Testis (tissue), 5 donors: ENCODE measurements at regions of chr2 and their contacts with region 1.

Region 1: DNA sequence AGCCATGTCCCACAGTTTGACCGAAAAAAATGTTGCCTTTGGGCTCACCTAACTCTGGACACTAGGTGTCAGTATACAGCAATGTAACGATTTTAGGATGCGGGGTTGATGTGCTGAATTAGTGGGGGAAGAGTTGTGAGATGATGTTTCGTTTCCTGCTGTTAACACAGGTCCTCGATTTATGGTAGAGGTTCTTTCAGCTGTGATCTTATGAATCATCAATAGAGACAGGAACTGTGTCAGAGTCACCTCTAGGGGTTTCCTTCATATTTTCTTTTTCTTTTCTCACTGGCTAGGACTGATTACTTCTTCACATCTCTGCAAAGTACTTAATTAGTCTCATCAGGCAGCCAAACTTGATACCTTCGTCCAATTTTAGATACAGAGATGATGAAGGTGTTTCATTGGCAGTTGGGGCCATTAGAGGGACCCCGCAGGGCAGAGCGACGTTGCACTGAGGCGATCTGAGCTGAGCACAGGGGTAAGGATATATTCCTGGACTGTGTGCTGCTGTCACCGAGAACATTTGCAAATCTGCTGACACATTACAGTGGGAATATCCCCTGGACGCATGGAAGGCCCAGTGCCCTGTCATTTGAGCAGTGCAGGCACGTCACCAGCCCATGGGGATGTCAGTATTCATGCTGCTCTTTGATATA is 10.2 kb upstream of the MMADHC start:
- DNase-seq: peak; percentile 43
- H3K4me3 ChIP-seq: no peak overlapping the region
- H3K27ac ChIP-seq: no peak overlapping the region
- H3K4me1 ChIP-seq: no peaks in the 10 kb centered on the region
- H3K27me3 ChIP-seq: no peaks in the 10 kb centered on the region
- CTCF ChIP-seq: peak; percentile 70 to 79 (median 75)
- POLR2A ChIP-seq: no peak

Region 2: DNA sequence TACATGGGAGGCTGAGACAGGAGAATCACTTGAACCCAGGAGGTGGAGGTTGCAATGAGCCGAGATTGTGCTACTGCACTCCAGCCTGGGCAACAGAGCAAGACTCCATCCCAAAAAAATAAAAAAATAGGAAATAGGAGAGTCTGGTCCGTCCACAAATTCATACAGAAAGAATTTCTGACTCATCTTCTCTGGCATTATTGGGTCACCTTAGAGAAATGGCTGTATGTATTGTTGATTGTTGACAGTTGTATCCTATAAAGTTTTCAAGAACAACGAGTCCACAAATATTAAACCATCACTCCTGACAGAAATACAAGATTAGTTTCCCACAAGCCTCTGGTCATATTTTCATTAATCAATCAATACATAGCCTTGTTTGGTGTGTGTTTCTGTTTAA is 1643.4 kb after region 1 on chr2:
- intact Hi-C with region 1: loop called (anchors 10 kb)
- DNase-seq: no peak
- H3K4me3 ChIP-seq: no peak overlapping the region
- H3K27ac ChIP-seq: no peak overlapping the region
- H3K4me1 ChIP-seq: no peaks in the 10 kb centered on the region
- H3K27me3 ChIP-seq: no peaks in the 10 kb centered on the region
- CTCF ChIP-seq: no peak
- POLR2A ChIP-seq: no peak